ENCODE measurements at regions of chr4 and their contacts with region 1.

Region 1: GRCh38 chr4:139416073-139416673 is 37.7 kb upstream of the RAB33B start:
- DNase-seq: peak in 6 of 9 donors; percentile 5 to 46 (median 43)
- ATAC-seq: peak; percentile 72
- H3K4me3 ChIP-seq: no peak overlapping the region
- H3K4me3 Mint-ChIP-seq: no peak overlapping the region
- H3K27ac ChIP-seq: no peak overlapping the region
- H3K27ac Mint-ChIP-seq: no peak overlapping the region
- H3K4me1 ChIP-seq: no peaks in the 10 kb centered on the region
- H3K4me1 Mint-ChIP-seq: peaks cover 0 to 19% (median 12%) of the 10 kb centered on the region in 7 donors
- H3K27me3 ChIP-seq: no peaks in the 10 kb centered on the region
- H3K27me3 Mint-ChIP-seq: no peaks in the 10 kb centered on the region

Region 2: DNA sequence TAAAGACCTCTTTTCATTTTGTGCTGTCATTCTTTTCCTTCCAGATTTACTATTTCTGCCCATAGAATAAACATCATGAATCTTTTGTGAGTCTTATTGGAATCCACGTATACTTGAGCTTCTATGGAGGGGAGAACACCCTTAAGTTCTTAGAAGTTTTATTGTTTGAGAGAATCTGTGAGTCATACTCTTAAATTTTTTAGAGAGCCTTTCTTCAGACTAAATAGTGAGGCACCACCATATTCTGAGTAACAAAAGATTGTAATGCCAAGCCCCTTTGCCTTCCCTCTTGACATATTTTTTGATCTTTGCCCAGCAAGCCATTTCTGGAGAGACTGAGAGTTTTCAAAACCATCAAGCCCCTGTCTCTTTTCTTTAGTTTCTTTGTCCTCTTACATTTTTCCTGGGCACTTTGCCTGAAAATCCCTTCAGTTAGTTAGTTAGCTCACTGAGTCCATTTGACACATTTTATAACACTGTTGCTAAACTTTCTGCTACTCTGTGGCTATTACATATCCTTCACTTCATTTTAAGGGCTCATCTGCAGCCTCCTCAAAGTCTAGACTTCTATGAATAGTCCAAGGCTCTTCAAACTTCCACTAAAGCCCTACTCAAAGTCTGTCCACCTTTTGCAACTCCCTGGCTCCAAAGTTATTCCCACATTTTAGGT is 48.6 kb before region 1 on chr4:
- CTCF ChIA-PET with region 1: no interaction called
- POLR2A ChIA-PET with region 1: no interaction called
- intact Hi-C with region 1: no loop called
- DNase-seq: no peak
- ATAC-seq: no peak
- H3K4me3 ChIP-seq: no peak overlapping the region
- H3K4me3 Mint-ChIP-seq: no peak overlapping the region
- H3K27ac ChIP-seq: no peak overlapping the region
- H3K27ac Mint-ChIP-seq: peak overlapping the region in 5 of 9 donors; percentile 12 to 76 (median 37)
- H3K4me1 ChIP-seq: no peaks in the 10 kb centered on the region
- H3K4me1 Mint-ChIP-seq: peaks cover 0 to 10% (median 5%) of the 10 kb centered on the region in 7 donors
- H3K27me3 ChIP-seq: no peaks in the 10 kb centered on the region
- H3K27me3 Mint-ChIP-seq: no peaks in the 10 kb centered on the region

Region 3: GRCh38 chr4:139389102-139389501 is 27.1 kb before region 1 on chr4:
- CTCF ChIA-PET with region 1: no interaction called
- POLR2A ChIA-PET with region 1: no interaction called
- intact Hi-C with region 1: no loop called
- DNase-seq: no peak
- ATAC-seq: no peak
- H3K4me3 ChIP-seq: no peak overlapping the region
- H3K4me3 Mint-ChIP-seq: no peak overlapping the region
- H3K27ac ChIP-seq: no peak overlapping the region
- H3K27ac Mint-ChIP-seq: peak overlapping the region in 5 of 9 donors; percentile 7 to 85 (median 24)
- H3K4me1 ChIP-seq: no peaks in the 10 kb centered on the region
- H3K4me1 Mint-ChIP-seq: peaks cover 0 to 19% (median 0%) of the 10 kb centered on the region in 7 donors
- H3K27me3 ChIP-seq: no peaks in the 10 kb centered on the region
- H3K27me3 Mint-ChIP-seq: no peaks in the 10 kb centered on the region

Region 4: DNA sequence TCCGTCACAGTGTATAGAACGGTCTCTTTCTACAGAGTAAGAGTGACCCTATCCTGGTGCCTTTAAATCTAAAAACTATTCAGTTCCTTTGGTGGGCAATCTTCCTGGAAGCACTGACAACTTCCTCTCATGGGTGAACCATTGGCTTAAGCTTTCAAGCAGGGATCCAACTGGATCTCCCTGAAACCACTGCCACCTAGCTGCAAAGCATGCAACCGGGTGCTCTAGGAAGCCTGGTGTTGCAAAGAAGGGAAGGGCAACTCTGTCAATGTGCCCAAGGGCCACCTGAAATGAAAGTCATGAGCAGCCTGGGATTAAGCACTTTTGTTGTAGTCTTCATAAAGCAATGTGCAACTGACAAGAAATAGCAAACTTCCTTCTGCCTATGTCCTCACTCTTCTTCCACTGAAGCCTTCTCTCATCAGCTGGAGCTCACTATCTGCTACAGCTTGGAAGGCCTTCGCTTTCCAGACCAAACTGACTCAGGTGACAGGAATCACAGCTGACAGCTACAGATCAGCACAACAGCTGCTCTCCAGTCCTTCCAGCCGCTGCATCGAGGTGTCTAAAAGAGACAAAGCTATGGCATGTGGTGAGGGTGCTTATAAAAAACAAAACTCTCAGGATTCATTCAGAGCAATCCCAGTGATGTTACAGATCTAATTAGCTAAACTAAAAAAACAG is 93.7 kb after region 1 on chr4:
- CTCF ChIA-PET with region 1: interaction called, 3 read pairs
- POLR2A ChIA-PET with region 1: no interaction called
- intact Hi-C with region 1: loop called in 1 of 2 experiments (anchors 1 kb)
- DNase-seq: peak in 1 of 9 donors; percentile 10
- ATAC-seq: no peak
- H3K4me3 ChIP-seq: no peak overlapping the region
- H3K4me3 Mint-ChIP-seq: no peak overlapping the region
- H3K27ac ChIP-seq: no peak overlapping the region
- H3K27ac Mint-ChIP-seq: peak overlapping the region in 1 of 9 donors; percentile 45
- H3K4me1 ChIP-seq: no peaks in the 10 kb centered on the region
- H3K4me1 Mint-ChIP-seq: peaks cover 0 to 2% (median 0%) of the 10 kb centered on the region in 7 donors
- H3K27me3 ChIP-seq: no peaks in the 10 kb centered on the region
- H3K27me3 Mint-ChIP-seq: no peaks in the 10 kb centered on the region

Measured in naive thymus-derived CD4-positive, alpha-beta T cell (primary cell).